Dendritic cell treated with granulocyte-macrophage colony-stimulating factor and Interleukin-4, amounts not matched to agents 40 ng/mL and 50 ng/mL, for 4 days (primary cell): ENCODE measurements at regions of chr19 and their contacts with region 1.

Region 1: GRCh38 chr19:52007806-52008557 is at the start of gene ZNF615:
- H3K4me3 Mint-ChIP-seq: peak within 1 kb of the TSS; percentile 93
- H3K27ac Mint-ChIP-seq: peak within 1 kb of the TSS; percentile 92
- H3K4me1 Mint-ChIP-seq: peaks cover 15% of the 10 kb centered on the region
- H3K27me3 Mint-ChIP-seq: no peaks in the 10 kb centered on the region

Region 2: GRCh38 chr19:51926784-51927742 is 80.9 kb before region 1 on chr19 and contains the start of gene ZNF613:
- intact Hi-C with region 1: loop called (anchors 5 kb)
- H3K4me3 Mint-ChIP-seq: peak within 1 kb of the TSS; percentile 95
- H3K27ac Mint-ChIP-seq: peak within 1 kb of the TSS; percentile 94
- H3K4me1 Mint-ChIP-seq: peaks cover 21% of the 10 kb centered on the region
- H3K27me3 Mint-ChIP-seq: no peaks in the 10 kb centered on the region

Region 3: GRCh38 chr19:51938936-51939335 is 69.0 kb before region 1 on chr19:
- intact Hi-C with region 1: no loop called
- H3K4me3 Mint-ChIP-seq: no peak overlapping the region
- H3K27ac Mint-ChIP-seq: no peak overlapping the region
- H3K4me1 Mint-ChIP-seq: no peaks in the 10 kb centered on the region
- H3K27me3 Mint-ChIP-seq: no peaks in the 10 kb centered on the region

Region 4: GRCh38 chr19:51986309-51987291 is 21.4 kb before region 1 on chr19 and contains the start of gene ZNF350:
- intact Hi-C with region 1: loop called (anchors 2 kb)
- H3K4me3 Mint-ChIP-seq: peak within 1 kb of the TSS; percentile 95
- H3K27ac Mint-ChIP-seq: peak within 1 kb of the TSS; percentile 98
- H3K4me1 Mint-ChIP-seq: peaks cover under 1% of the 10 kb centered on the region
- H3K27me3 Mint-ChIP-seq: no peaks in the 10 kb centered on the region

Region 5: GRCh38 chr19:52028027-52028779 is 20.2 kb after region 1 on chr19 and contains the start of gene ZNF614:
- intact Hi-C with region 1: loop called (anchors 1 kb)
- H3K4me3 Mint-ChIP-seq: peak within 1 kb of the TSS; percentile 98
- H3K27ac Mint-ChIP-seq: peak within 1 kb of the TSS; percentile 100
- H3K4me1 Mint-ChIP-seq: peaks cover 27% of the 10 kb centered on the region
- H3K27me3 Mint-ChIP-seq: no peaks in the 10 kb centered on the region